ENCODE measurements at regions of chr18 and their contacts with region 1.

Region 1: GRCh38 chr18:49021433-49022129 is 70.8 kb upstream of the SMAD7 start:
- DNase-seq: peak; percentile 82
- ATAC-seq: peak; percentile 86
- H3K4me3 ChIP-seq: peak overlapping the region; percentile 49 to 67 (median 54)
- H3K27ac ChIP-seq: no peak overlapping the region
- H3K4me1 ChIP-seq: peaks cover 40% of the 10 kb centered on the region
- H3K27me3 ChIP-seq: peaks cover 2 to 15% of the 10 kb centered on the region in 2 experiments; a peak in 4 of 5 replicates
- CTCF ChIP-seq: peak; percentile 97
- EP300 ChIP-seq: no peak
- POLR2A ChIP-seq: no peak; a peak in 1 of 4 replicates
- RAD21 ChIP-seq: peak; percentile 88

Region 2: DNA sequence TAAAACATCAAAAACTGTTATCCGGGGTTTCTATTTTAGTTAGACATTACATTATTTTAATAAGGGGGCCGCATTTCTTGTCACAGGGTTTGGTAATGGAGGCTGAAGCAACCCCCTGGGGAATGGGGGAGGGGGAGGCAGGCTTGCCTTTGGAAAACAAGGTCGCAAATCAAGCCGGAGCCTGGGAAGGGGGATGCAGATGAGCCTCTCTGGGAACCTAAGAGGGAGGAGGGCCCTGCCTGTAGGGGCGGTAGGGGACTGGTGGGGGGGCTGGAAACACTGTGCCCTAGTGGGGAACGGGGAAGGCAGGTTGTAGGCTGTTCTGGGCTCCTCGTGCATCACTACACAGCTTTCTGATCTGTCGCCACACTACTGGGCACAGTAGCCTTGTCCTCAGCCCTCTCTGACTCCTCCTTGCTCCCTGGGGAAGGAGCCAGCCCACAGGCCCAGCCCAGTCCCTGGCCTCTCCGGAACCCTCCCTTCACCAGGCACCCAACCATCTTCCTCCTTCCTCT is 920.9 kb before region 1 on chr18:
- CTCF ChIA-PET with region 1: no interaction called
- POLR2A ChIA-PET with region 1: no interaction called
- in situ Hi-C with region 1: no loop called
- intact Hi-C with region 1: no loop called
- DNase-seq: no peak
- ATAC-seq: no peak
- H3K4me3 ChIP-seq: no peak overlapping the region
- H3K27ac ChIP-seq: no peak overlapping the region
- H3K4me1 ChIP-seq: no peaks in the 10 kb centered on the region
- H3K27me3 ChIP-seq: peaks cover 0 to 15% of the 10 kb centered on the region in 2 experiments; a peak in 2 of 5 replicates
- CTCF ChIP-seq: no peak
- EP300 ChIP-seq: no peak
- POLR2A ChIP-seq: no peak
- RAD21 ChIP-seq: no peak

Region 3: DNA sequence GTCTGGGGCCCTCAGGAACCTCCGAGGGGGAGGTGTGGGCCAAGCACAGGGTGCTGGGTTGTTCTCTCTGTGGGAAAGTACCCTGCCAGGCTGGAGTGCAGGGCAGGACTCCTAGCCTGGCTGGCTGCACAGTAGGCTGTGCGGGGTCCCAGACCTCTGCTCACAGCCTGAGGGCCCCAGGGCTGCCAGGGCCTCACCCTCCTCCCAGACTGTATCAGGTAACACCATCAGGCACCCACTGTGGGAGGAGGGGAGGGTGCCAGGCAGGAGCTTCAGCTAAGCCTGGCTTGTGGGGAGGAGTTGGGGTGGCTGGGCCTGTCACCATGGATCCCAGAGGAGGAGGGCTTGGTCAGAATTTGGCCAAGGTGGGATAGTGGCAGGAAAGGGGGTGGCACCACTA is 879.2 kb before region 1 on chr18:
- CTCF ChIA-PET with region 1: no interaction called
- POLR2A ChIA-PET with region 1: no interaction called
- in situ Hi-C with region 1: no loop called
- intact Hi-C with region 1: no loop called
- DNase-seq: no peak
- ATAC-seq: no peak
- H3K4me3 ChIP-seq: no peak overlapping the region
- H3K27ac ChIP-seq: no peak overlapping the region
- H3K4me1 ChIP-seq: no peaks in the 10 kb centered on the region
- H3K27me3 ChIP-seq: peaks cover 2 to 22% of the 10 kb centered on the region in 2 experiments; a peak in 3 of 5 replicates
- CTCF ChIP-seq: no peak
- EP300 ChIP-seq: no peak
- POLR2A ChIP-seq: no peak
- RAD21 ChIP-seq: no peak

Region 4: GRCh38 chr18:48959921-48960920 is 61.4 kb before region 1 on chr18:
- CTCF ChIA-PET with region 1: no interaction called
- POLR2A ChIA-PET with region 1: no interaction called
- in situ Hi-C with region 1: no loop called
- intact Hi-C with region 1: loop called (anchors 5 kb)
- DNase-seq: no peak
- ATAC-seq: no peak
- H3K4me3 ChIP-seq: no peak overlapping the region
- H3K27ac ChIP-seq: no peak overlapping the region
- H3K4me1 ChIP-seq: peaks cover 56% of the 10 kb centered on the region
- H3K27me3 ChIP-seq: peaks cover 0 to 16% of the 10 kb centered on the region in 2 experiments; a peak in 4 of 5 replicates
- CTCF ChIP-seq: no peak
- EP300 ChIP-seq: no peak
- POLR2A ChIP-seq: no peak
- RAD21 ChIP-seq: no peak

Region 5: DNA sequence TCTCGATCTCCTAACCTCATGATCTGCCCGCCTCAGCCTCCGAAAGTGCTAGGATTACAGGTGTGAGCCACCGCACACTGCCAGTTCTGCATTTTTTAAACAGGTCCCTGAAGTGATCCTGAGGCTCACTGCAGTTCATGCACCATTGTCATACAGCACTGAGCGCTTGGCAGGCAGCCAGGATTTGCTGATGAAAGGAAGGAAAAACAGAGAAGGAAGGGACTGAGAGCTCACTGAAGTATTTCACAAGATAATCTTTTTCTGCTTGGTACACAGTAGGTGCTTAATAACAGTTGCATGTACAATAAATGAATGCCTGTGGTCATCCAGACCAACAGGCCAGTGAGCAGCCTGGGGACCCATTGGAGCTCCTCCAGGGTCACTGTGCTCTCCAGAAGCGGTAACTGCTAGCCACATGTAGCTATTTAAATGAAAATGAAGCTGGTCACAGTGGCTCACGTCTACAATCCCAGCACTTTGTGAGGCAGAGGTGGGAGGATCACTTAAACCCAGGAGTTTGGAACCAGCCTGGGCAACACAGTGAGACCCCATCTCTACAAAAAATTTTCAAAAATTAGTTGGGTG is 37.7 kb before region 1 on chr18:
- CTCF ChIA-PET with region 1: no interaction called
- POLR2A ChIA-PET with region 1: no interaction called
- in situ Hi-C with region 1: no loop called
- intact Hi-C with region 1: loop called (anchors 5 kb)
- DNase-seq: peak; percentile 63
- ATAC-seq: no peak
- H3K4me3 ChIP-seq: no peak overlapping the region
- H3K27ac ChIP-seq: no peak overlapping the region
- H3K4me1 ChIP-seq: peaks cover 73% of the 10 kb centered on the region
- H3K27me3 ChIP-seq: no peaks in the 10 kb centered on the region
- CTCF ChIP-seq: no peak
- EP300 ChIP-seq: no peak
- POLR2A ChIP-seq: no peak
- RAD21 ChIP-seq: no peak

Region 6: GRCh38 chr18:49059028-49059834 is 37.6 kb after region 1 on chr18:
- CTCF ChIA-PET with region 1: no interaction called
- POLR2A ChIA-PET with region 1: no interaction called
- in situ Hi-C with region 1: no loop called
- intact Hi-C with region 1: no loop called
- DNase-seq: peak; percentile 34
- ATAC-seq: peak; percentile 81
- H3K4me3 ChIP-seq: no peak overlapping the region
- H3K27ac ChIP-seq: no peak overlapping the region
- H3K4me1 ChIP-seq: no peaks in the 10 kb centered on the region
- H3K27me3 ChIP-seq: no peaks in the 10 kb centered on the region
- CTCF ChIP-seq: peak; percentile 55
- EP300 ChIP-seq: no peak
- POLR2A ChIP-seq: no peak
- RAD21 ChIP-seq: 0 out of 2 replicates have a peak, but pooled peaks have one; percentile 40

Region 7: DNA sequence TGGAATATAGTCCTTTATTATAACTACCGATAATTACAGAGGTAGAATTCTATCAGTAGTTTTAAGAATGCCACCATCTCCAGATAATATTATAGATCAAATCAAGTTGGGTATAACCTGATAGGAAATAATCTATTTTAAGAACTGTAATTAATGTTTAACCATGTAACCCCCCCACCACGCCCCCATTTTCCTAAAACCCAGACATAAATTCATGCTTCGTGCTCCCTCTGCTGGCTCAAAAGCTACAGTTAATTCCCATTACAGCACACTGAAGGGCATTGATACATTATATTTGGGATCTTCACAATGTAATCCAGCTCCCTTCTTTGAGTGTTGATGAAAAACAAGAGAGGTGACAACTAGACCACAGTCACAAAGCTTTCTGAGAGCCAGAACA is 157.2 kb after region 1 on chr18:
- CTCF ChIA-PET with region 1: interaction called, 5 read pairs
- POLR2A ChIA-PET with region 1: no interaction called
- in situ Hi-C with region 1: no loop called
- intact Hi-C with region 1: loop called (anchors 1 kb)
- DNase-seq: peak; percentile 36
- ATAC-seq: peak; percentile 56
- H3K4me3 ChIP-seq: no peak overlapping the region
- H3K27ac ChIP-seq: no peak overlapping the region
- H3K4me1 ChIP-seq: peaks cover 20% of the 10 kb centered on the region
- H3K27me3 ChIP-seq: no peaks in the 10 kb centered on the region
- CTCF ChIP-seq: peak; percentile 68
- EP300 ChIP-seq: no peak
- POLR2A ChIP-seq: no peak
- RAD21 ChIP-seq: peak; percentile 59

Region 8: GRCh38 chr18:49238433-49239042 is 217.0 kb after region 1 on chr18:
- CTCF ChIA-PET with region 1: no interaction called
- POLR2A ChIA-PET with region 1: no interaction called
- in situ Hi-C with region 1: no loop called
- intact Hi-C with region 1: loop called (anchors 2 kb)
- DNase-seq: peak; percentile 38
- ATAC-seq: no peak
- H3K4me3 ChIP-seq: no peak overlapping the region
- H3K27ac ChIP-seq: no peak overlapping the region
- H3K4me1 ChIP-seq: no peaks in the 10 kb centered on the region
- H3K27me3 ChIP-seq: no peaks in the 10 kb centered on the region
- CTCF ChIP-seq: peak; percentile 69
- EP300 ChIP-seq: no peak
- POLR2A ChIP-seq: no peak
- RAD21 ChIP-seq: no peak; the same call in 1 of the 2 replicates

Region 9: GRCh38 chr18:49447810-49448745 is 426.5 kb after region 1 on chr18:
- CTCF ChIA-PET with region 1: no interaction called
- POLR2A ChIA-PET with region 1: no interaction called
- in situ Hi-C with region 1: no loop called
- intact Hi-C with region 1: loop called (anchors 10 kb)
- DNase-seq: peak; percentile 76
- ATAC-seq: peak; percentile 98
- H3K4me3 ChIP-seq: no peak overlapping the region
- H3K27ac ChIP-seq: no peak overlapping the region
- H3K4me1 ChIP-seq: peaks cover 13% of the 10 kb centered on the region; the same call in 1 of the 2 replicates
- H3K27me3 ChIP-seq: no peaks in the 10 kb centered on the region
- CTCF ChIP-seq: peak; percentile 85
- EP300 ChIP-seq: no peak
- POLR2A ChIP-seq: no peak
- RAD21 ChIP-seq: peak; percentile 67